PC-9 (cell line): ENCODE measurements at regions of chr1 and their contacts with region 1.

Region 1: GRCh38 chr1:229972600-229973296 is 94.3 kb upstream of the GALNT2 start:
- DNase-seq: no peak
- H3K4me3 ChIP-seq: no peak overlapping the region
- H3K27ac ChIP-seq: no peak overlapping the region
- H3K4me1 ChIP-seq: no peaks in the 10 kb centered on the region
- H3K27me3 ChIP-seq: peaks cover 10% of the 10 kb centered on the region; the same call in 1 of the 2 replicates
- CTCF ChIP-seq: peak; percentile 33; the same call in 1 of the 2 replicates

Region 2: DNA sequence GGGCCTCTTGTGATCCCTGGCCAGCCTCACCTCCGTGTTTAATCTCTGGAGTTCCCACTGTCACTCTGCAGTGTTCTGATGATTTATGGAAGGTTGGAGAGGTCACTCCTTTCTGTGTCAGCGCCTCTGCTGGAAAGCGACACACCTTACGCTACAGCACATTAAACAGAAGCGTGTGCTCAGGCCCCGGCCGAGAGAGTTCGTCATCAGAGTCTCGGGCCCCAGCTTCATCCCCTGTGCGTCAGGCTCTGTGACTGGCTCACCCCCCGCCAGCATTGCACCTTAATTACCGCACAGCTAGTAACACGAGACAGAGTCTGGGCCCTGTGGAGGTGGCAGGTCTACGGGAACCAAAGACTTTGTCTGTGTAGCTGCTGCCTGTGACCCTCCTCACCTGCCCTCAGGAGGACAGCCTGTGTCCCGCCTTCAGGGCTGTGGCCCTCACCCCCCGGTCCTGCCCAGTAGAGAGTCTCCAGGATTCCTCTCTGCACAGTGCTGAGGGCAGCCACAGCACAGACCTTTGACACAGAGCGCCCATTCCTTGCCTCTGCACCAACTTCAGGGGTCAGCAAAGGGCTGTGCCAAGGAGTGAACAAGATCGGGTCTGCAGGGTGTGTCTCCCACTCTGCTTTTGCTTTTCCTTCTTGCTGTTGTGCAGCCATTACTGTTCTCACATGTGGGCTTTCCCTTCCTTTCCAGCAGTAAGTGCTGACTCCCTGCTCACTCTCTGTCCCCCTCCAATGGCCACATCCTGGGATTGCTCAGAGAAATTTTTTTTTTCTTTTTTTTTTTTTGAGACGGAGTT is 295.8 kb after region 1 on chr1:
- CTCF ChIA-PET with region 1: no interaction called
- POLR2A ChIA-PET with region 1: no interaction called
- intact Hi-C with region 1: loop called (anchors 1 kb)
- DNase-seq: peak; percentile 48 to 50
- H3K4me3 ChIP-seq: no peak overlapping the region
- H3K27ac ChIP-seq: no peak overlapping the region
- H3K4me1 ChIP-seq: no peaks in the 10 kb centered on the region
- H3K27me3 ChIP-seq: no peaks in the 10 kb centered on the region
- CTCF ChIP-seq: peak; percentile 75